HepG2 (cell line): ENCODE measurements at regions of chr1 and their contacts with region 1.

Region 1: DNA sequence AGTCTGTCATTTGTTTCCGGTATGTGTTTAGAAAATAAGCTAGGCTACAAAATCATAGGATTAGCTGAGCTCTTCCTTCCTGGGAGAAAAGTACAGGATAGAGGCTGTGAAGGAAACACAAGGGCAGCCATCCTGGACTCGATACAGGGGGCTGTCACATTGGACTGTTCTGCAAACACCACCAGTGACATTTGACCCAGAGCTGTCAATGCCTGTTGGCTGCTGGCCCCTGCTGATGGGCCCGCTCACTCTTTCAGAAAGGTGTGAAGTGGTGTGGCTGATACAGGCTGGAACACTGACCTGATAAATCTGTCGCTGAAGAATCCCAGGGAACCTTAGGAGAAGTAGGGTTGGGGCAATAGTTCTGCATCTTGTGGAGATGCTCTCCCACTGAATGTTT is 183.1 kb downstream of the RHOU start:
- DNase-seq: peak; percentile 33
- ATAC-seq: peak; percentile 89
- H3K4me3 ChIP-seq: no peak overlapping the region
- H3K27ac ChIP-seq: no peak overlapping the region
- H3K4me1 ChIP-seq: peaks cover 40% of the 10 kb centered on the region
- H3K27me3 ChIP-seq: peaks cover 0 to 2% of the 10 kb centered on the region in 2 experiments; a peak in 1 of 5 replicates
- CTCF ChIP-seq: peak; percentile 76
- EP300 ChIP-seq: no peak
- POLR2A ChIP-seq: no peak
- RAD21 ChIP-seq: 0 out of 2 replicates have a peak, but pooled peaks have one; percentile 21

Region 2: GRCh38 chr1:228308628-228309363 is 609.5 kb before region 1 on chr1:
- CTCF ChIA-PET with region 1: no interaction called
- POLR2A ChIA-PET with region 1: no interaction called
- in situ Hi-C with region 1: no loop called
- intact Hi-C with region 1: no loop called
- DNase-seq: peak; percentile 3
- ATAC-seq: peak; percentile 62
- H3K4me3 ChIP-seq: no peak overlapping the region
- H3K27ac ChIP-seq: no peak overlapping the region
- H3K4me1 ChIP-seq: no peaks in the 10 kb centered on the region
- H3K27me3 ChIP-seq: peaks cover 6 to 29% of the 10 kb centered on the region in 2 experiments; a peak in 4 of 5 replicates
- CTCF ChIP-seq: no peak
- EP300 ChIP-seq: no peak
- POLR2A ChIP-seq: no peak
- RAD21 ChIP-seq: no peak

Region 3: GRCh38 chr1:228490120-228491078 is 427.9 kb before region 1 on chr1:
- CTCF ChIA-PET with region 1: no interaction called
- POLR2A ChIA-PET with region 1: no interaction called
- in situ Hi-C with region 1: no loop called
- intact Hi-C with region 1: no loop called
- DNase-seq: no peak
- ATAC-seq: no peak
- H3K4me3 ChIP-seq: no peak overlapping the region
- H3K27ac ChIP-seq: peak overlapping the region; percentile 12
- H3K4me1 ChIP-seq: peaks cover 36% of the 10 kb centered on the region
- H3K27me3 ChIP-seq: no peaks in the 10 kb centered on the region
- CTCF ChIP-seq: no peak
- EP300 ChIP-seq: no peak
- POLR2A ChIP-seq: no peak
- RAD21 ChIP-seq: no peak

Region 4: DNA sequence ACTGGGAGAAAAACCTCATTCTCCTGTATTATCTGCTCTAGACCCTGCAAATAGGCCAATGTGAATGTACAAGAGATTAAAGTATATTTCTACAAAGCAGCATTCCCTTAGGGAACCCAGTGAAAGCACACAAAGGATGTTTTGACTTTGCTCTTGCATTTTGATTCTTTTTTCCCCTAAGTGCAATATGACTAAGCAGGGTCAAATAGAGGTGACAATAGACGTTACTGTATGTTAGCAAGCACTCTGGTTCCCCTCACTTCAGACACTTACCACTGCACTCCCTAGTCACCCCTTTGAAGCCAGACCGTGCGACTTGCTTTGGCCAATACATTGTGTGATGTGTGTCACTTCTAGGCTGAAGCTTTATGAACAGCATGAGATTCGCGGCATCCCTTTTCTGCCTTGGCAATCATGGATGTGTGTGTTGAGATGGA is 26.6 kb after region 1 on chr1:
- CTCF ChIA-PET with region 1: no interaction called
- POLR2A ChIA-PET with region 1: no interaction called
- in situ Hi-C with region 1: no loop called
- intact Hi-C with region 1: loop called (anchors 2 kb)
- DNase-seq: peak; percentile 72
- ATAC-seq: peak; percentile 54
- H3K4me3 ChIP-seq: no peak overlapping the region
- H3K27ac ChIP-seq: no peak overlapping the region
- H3K4me1 ChIP-seq: peaks cover 43% of the 10 kb centered on the region
- H3K27me3 ChIP-seq: no peaks in the 10 kb centered on the region
- CTCF ChIP-seq: no peak
- EP300 ChIP-seq: peak in 1 of 2 experiments; percentile 20; a peak in 1 of 4 replicates
- POLR2A ChIP-seq: no peak
- RAD21 ChIP-seq: no peak